H1 (cell line): ENCODE measurements at regions of chr1 and their contacts with region 1.

Region 1: DNA sequence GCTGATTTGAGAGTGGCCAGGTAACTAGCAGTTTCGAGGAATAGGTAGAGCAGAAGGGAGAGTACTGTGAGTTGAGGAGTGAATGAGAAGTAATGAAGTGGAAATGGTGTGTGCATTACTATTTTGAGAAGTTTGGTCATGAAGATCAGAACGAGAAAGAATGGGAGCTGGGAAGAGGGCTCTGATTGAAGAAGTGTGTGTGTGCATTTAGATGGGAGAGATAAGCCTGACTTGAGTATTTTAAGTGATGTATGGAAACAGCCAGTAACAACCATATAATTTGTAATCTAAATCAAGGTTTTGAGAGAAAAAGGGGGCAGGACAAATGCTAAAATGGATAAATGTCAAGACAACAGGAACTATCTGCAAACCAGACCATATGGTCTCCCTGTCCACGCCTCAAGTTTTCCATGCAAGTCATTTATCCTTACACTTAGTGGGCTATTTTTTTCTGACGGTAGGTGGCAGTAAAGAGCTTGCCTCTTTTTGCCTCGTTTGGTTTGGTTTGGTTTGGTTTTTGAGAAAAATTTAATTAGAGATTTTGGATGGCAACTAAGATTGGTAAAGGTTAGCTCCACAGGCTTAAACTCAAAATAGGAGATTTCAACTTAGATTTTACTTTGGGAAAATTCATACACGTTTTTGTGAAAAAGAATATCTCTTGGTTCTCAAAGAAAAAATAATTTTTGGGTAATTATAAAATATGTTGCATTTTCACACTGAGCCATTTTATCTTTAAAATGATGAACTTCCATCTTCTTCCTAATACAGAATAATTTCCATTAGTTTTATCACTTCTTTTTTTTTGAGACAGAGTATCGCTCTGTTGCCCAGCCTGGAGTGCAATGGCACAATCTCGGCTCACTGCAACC is 9.5 kb upstream of the B3GALNT2 start:
- DNase-seq: no peak
- H3K4me3 ChIP-seq: no peak overlapping the region
- H3K27ac ChIP-seq: no peak overlapping the region
- H3K4me1 ChIP-seq: peaks cover 0 to 3% (median 2%) of the 10 kb centered on the region in 4 experiments; a peak in 2 of 7 replicates
- H3K27me3 ChIP-seq: no peaks in the 10 kb centered on the region; a peak in 1 of 7 replicates
- CTCF ChIP-seq: peak in 2 of 3 experiments; percentile 76 to 81; a peak in 3 of 4 replicates
- EP300 ChIP-seq: no peak
- POLR2A ChIP-seq: no peak
- RAD21 ChIP-seq: peak; percentile 86 to 90

Region 2: DNA sequence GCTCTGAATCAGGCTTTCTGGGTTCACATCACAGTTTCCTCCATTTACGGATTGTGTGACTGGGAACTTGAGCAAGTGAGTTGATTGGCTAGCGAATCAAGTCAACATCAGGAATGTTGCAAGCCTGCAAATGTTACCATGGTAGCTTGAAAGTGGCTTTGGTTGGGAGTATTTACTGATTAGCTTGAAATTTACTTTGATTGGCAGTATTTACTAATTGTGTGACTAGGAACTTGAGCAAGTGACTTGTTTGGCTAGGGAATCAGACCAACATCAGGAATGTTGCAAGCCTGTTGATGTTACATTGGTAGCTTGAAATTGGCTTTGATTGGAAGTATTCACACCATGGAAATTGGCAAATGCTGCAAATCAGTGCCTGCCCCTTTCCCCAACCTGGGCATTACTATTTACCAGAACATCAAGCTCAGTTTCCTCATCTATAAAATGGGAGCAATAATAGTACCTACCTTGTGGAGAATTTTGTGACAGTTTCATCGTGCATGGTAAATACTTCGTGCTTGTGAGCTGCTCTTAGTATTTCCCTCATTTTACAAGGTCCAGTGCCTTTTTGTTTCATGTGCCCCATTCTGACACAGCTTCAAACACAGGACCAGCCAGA is 13.6 kb after region 1 on chr1:
- CTCF ChIA-PET with region 1: interaction called, 13 read pairs
- POLR2A ChIA-PET with region 1: no interaction called
- DNase-seq: no peak
- H3K4me3 ChIP-seq: no peak overlapping the region
- H3K27ac ChIP-seq: no peak overlapping the region
- H3K4me1 ChIP-seq: no peaks in the 10 kb centered on the region
- H3K27me3 ChIP-seq: no peaks in the 10 kb centered on the region; a peak in 1 of 7 replicates
- CTCF ChIP-seq: no peak
- EP300 ChIP-seq: no peak
- POLR2A ChIP-seq: no peak
- RAD21 ChIP-seq: no peak

Region 3: GRCh38 chr1:235545277-235545930 is 31.7 kb after region 1 on chr1:
- CTCF ChIA-PET with region 1: interaction called, 17 read pairs
- POLR2A ChIA-PET with region 1: no interaction called
- DNase-seq: no peak
- H3K4me3 ChIP-seq: no peak overlapping the region
- H3K27ac ChIP-seq: no peak overlapping the region
- H3K4me1 ChIP-seq: peaks cover 3 to 7% (median 5%) of the 10 kb centered on the region in 4 experiments
- H3K27me3 ChIP-seq: no peaks in the 10 kb centered on the region
- CTCF ChIP-seq: no peak
- EP300 ChIP-seq: no peak
- POLR2A ChIP-seq: no peak
- RAD21 ChIP-seq: no peak

Region 4: GRCh38 chr1:235571482-235571881 is 57.8 kb after region 1 on chr1:
- CTCF ChIA-PET with region 1: no interaction called
- POLR2A ChIA-PET with region 1: no interaction called
- DNase-seq: no peak
- H3K4me3 ChIP-seq: no peak overlapping the region
- H3K27ac ChIP-seq: no peak overlapping the region
- H3K4me1 ChIP-seq: no peaks in the 10 kb centered on the region; a peak in 1 of 7 replicates
- H3K27me3 ChIP-seq: no peaks in the 10 kb centered on the region
- CTCF ChIP-seq: no peak
- EP300 ChIP-seq: no peak
- POLR2A ChIP-seq: no peak
- RAD21 ChIP-seq: no peak

Region 5: DNA sequence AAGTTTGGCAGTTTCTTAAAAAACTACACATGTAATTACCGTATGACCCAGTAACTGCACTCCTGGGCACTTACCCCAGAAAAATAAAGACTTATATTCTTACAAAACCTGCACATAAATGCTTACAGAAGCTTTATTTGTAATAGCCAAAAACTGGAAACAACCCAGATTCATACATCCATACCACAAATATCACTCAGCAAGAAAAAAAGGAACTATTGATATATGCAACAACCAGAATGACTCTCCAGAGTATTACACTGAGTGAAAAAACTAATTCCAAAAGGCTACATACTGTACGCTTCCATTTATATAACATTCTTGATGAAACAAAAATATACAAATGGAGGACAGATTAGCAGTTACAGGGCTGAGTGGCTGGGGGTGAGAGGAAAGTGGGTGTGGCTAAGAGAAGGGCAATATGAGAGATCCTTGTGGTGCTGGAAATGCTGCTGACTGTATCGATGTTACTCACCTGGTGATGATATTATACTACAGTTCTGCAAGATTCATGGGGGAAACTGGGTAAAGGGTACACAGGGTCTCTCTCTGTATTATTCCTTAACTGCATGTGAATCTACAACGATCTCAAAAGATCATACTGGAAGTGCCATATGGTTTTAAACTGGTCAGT is 231.9 kb after region 1 on chr1:
- CTCF ChIA-PET with region 1: no interaction called
- POLR2A ChIA-PET with region 1: no interaction called
- DNase-seq: no peak
- H3K4me3 ChIP-seq: no peak overlapping the region
- H3K27ac ChIP-seq: no peak overlapping the region
- H3K4me1 ChIP-seq: no peaks in the 10 kb centered on the region
- H3K27me3 ChIP-seq: peaks cover 0 to 1% (median 0%) of the 10 kb centered on the region in 4 experiments; a peak in 1 of 7 replicates
- CTCF ChIP-seq: no peak
- EP300 ChIP-seq: no peak
- POLR2A ChIP-seq: no peak
- RAD21 ChIP-seq: no peak

Region 6: GRCh38 chr1:235783148-235783776 is 269.5 kb after region 1 on chr1:
- CTCF ChIA-PET with region 1: interaction called, 14 read pairs
- POLR2A ChIA-PET with region 1: no interaction called
- DNase-seq: no peak
- H3K4me3 ChIP-seq: no peak overlapping the region
- H3K27ac ChIP-seq: no peak overlapping the region
- H3K4me1 ChIP-seq: no peaks in the 10 kb centered on the region
- H3K27me3 ChIP-seq: no peaks in the 10 kb centered on the region
- CTCF ChIP-seq: peak in 1 of 3 experiments; percentile 12; a peak in 1 of 4 replicates
- EP300 ChIP-seq: no peak
- POLR2A ChIP-seq: no peak
- RAD21 ChIP-seq: peak in 1 of 2 experiments; percentile 65; a peak in 3 of 4 replicates